Activated CD8-positive, alpha-beta T cell treated with anti-CD3 and anti-CD28 coated beads for 36 hours (primary cell): ENCODE measurements at regions of chr1 and their contacts with region 1.

Region 1: GRCh38 chr1:87328272-87329050 is at the start of gene LMO4:
- DNase-seq: peak; percentile 95
- ATAC-seq: peak; percentile 78
- H3K4me3 Mint-ChIP-seq: peak within 1 kb of the TSS; percentile 87
- H3K27ac Mint-ChIP-seq: peak within 1 kb of the TSS; percentile 94
- H3K4me1 Mint-ChIP-seq: peaks cover 31% of the 10 kb centered on the region
- H3K27me3 Mint-ChIP-seq: peaks cover 2% of the 10 kb centered on the region
- CTCF ChIP-seq: no peak
- total RNA-seq, gene LMO4: 35.1 to 36.8 TPM

Region 2: DNA sequence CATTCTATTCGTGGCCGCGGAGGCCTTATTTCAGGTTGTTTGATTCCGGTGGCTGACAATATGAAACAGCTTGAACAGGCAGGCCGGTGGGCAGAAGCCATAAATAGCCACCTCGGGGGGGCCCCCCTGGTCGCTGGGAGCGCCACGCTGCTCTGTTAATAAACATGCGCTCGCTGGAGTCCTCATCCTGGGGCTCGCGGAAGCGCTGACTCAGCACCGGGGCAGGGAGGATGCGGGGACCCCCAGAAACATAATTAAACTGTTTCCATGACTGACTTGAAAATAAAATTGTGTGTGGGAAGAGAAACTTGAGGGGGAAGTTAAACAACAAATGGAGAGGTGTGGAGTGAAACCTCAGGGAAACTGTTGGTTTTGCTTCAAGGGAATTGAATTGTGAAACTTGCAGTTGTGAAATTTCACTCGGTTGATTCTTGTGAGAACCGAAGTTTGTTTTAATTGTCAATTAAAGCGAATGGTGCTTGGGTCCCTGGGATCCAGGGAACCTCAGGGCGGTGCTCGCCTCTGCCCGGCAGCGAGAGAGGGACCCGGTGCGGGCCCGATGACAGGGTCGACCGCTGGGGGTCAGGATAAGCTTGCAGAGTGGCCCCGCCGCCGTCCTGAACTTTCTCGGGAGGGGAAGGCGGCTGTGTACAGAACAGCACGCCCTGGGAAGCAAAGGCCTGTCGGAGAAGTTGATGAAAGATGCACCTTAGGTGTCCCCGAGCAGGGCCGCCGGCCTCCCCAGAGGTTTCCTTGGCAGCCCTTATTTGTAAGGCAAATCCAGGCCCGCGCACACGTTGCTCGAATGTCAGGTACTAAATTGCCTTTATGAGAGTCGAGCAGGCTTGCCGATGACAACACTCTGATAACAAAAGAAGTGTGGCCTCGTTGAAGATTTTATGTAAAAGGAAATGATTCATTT is 176.7 kb before region 1 on chr1:
- CTCF ChIA-PET with region 1: no interaction called
- POLR2A ChIA-PET with region 1: interaction called, 3 read pairs
- intact Hi-C with region 1: loop called (anchors 5 kb)
- DNase-seq: peak; percentile 84
- ATAC-seq: peak; percentile 88
- H3K4me3 Mint-ChIP-seq: peak overlapping the region; percentile 63
- H3K27ac Mint-ChIP-seq: peak overlapping the region; percentile 63
- H3K4me1 Mint-ChIP-seq: peaks cover 18% of the 10 kb centered on the region
- H3K27me3 Mint-ChIP-seq: peaks cover 42% of the 10 kb centered on the region
- CTCF ChIP-seq: peak; percentile 38

Region 3: GRCh38 chr1:87318056-87318650 is 10.3 kb before region 1 on chr1:
- CTCF ChIA-PET with region 1: interaction called, 19 read pairs
- POLR2A ChIA-PET with region 1: no interaction called
- intact Hi-C with region 1: no loop called
- DNase-seq: no peak
- ATAC-seq: no peak
- H3K4me3 Mint-ChIP-seq: no peak overlapping the region
- H3K27ac Mint-ChIP-seq: no peak overlapping the region
- H3K4me1 Mint-ChIP-seq: peaks cover 3% of the 10 kb centered on the region
- H3K27me3 Mint-ChIP-seq: peaks cover 2% of the 10 kb centered on the region
- CTCF ChIP-seq: no peak

Region 4: GRCh38 chr1:87348341-87348999 is 20.0 kb after region 1 on chr1:
- CTCF ChIA-PET with region 1: interaction called, 10 read pairs
- POLR2A ChIA-PET with region 1: interaction called, 3 read pairs
- intact Hi-C with region 1: no loop called
- DNase-seq: no peak
- ATAC-seq: no peak
- H3K4me3 Mint-ChIP-seq: no peak overlapping the region
- H3K27ac Mint-ChIP-seq: no peak overlapping the region
- H3K4me1 Mint-ChIP-seq: peaks cover 15% of the 10 kb centered on the region
- H3K27me3 Mint-ChIP-seq: no peaks in the 10 kb centered on the region
- CTCF ChIP-seq: no peak

Region 5: GRCh38 chr1:87402241-87403002 is 74.0 kb after region 1 on chr1:
- CTCF ChIA-PET with region 1: interaction called, 18 read pairs
- POLR2A ChIA-PET with region 1: interaction called, 7 read pairs
- intact Hi-C with region 1: no loop called
- DNase-seq: no peak
- ATAC-seq: no peak
- H3K4me3 Mint-ChIP-seq: no peak overlapping the region
- H3K27ac Mint-ChIP-seq: no peak overlapping the region
- H3K4me1 Mint-ChIP-seq: peaks cover 17% of the 10 kb centered on the region
- H3K27me3 Mint-ChIP-seq: peaks cover 10% of the 10 kb centered on the region
- CTCF ChIP-seq: no peak

Region 6: GRCh38 chr1:87953732-87954344 is 625.4 kb after region 1 on chr1:
- CTCF ChIA-PET with region 1: interaction called, 25 read pairs
- POLR2A ChIA-PET with region 1: interaction called, 3 read pairs
- intact Hi-C with region 1: loop called (anchors 10 kb)
- DNase-seq: peak; percentile 62
- ATAC-seq: peak; percentile 49
- H3K4me3 Mint-ChIP-seq: no peak overlapping the region
- H3K27ac Mint-ChIP-seq: no peak overlapping the region
- H3K4me1 Mint-ChIP-seq: no peaks in the 10 kb centered on the region
- H3K27me3 Mint-ChIP-seq: peaks cover 11% of the 10 kb centered on the region
- CTCF ChIP-seq: peak; percentile 62